Activated CD4-positive, alpha-beta memory T cell treated with anti-CD3 and anti-CD28 coated beads for 36 hours (primary cell): ENCODE measurements at regions of chr11 and their contacts with region 1.

Region 1: GRCh38 chr11:61332797-61333549 is at the starts of genes DDB1 and TKFC:
- DNase-seq: peak; percentile 99
- H3K4me3 Mint-ChIP-seq: peak within 1 kb of the TSS; percentile 97
- H3K27ac Mint-ChIP-seq: peak within 1 kb of the TSS; percentile 97
- H3K4me1 Mint-ChIP-seq: peaks cover 55% of the 10 kb centered on the region
- H3K27me3 Mint-ChIP-seq: no peaks in the 10 kb centered on the region
- total RNA-seq, gene DDB1: 222 to 223 TPM
- total RNA-seq, gene TKFC: 118 to 120 TPM

Region 2: DNA sequence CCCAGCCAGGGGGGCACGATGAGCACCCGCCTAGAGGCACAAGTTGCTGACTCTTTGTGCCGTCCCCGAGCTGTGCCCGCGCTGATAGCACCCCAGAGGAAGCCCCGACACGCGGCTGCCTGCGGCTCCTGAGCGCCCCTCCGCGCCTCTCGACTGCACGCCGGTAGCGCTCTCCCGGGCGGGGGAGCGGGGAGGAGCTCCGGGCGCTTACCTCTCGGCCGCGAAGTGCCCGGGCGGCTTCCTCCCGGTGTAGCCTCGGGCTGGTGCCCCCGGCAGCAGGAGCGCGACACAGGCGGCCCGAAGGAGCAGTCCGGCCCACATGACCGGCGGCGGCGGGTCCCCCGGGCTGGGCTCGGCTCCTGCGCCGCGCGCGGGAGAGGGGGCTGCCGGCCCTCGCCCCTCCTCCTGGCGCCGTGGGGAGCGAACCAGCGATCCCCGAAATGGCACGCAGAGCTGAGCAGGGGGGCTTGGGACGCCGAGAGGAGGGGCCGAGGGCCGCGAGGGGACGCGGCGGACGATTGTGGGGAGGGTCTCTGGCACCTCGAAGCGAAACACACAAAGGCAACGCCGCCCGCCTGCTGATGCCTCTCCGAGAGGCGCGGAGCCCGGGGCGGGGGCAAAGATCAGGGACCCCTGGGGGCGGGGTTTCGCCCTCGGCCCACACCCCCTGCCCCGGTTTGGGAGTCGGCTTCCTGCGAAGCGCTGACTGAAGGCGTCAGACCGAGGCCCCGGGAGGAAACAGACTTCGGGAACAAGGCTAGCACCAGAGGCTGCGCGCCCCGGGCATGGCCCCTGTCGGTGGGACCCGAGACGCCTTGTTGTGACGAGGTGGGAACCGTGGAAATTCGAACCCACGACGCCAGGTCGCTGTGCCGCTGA is 38.0 kb before region 1 on chr11 and contains the start of gene VWCE:
- CTCF ChIA-PET with region 1: interaction called, 10 read pairs
- POLR2A ChIA-PET with region 1: interaction called, 6 read pairs
- intact Hi-C with region 1: no loop called
- DNase-seq: peak; percentile 81
- H3K4me3 Mint-ChIP-seq: peak within 1 kb of the TSS; percentile 72
- H3K27ac Mint-ChIP-seq: no peak within 1 kb of the TSS
- H3K4me1 Mint-ChIP-seq: peaks cover 32% of the 10 kb centered on the region
- H3K27me3 Mint-ChIP-seq: peaks cover 19% of the 10 kb centered on the region
- total RNA-seq, gene VWCE: 1.1 to 1.4 TPM

Region 3: DNA sequence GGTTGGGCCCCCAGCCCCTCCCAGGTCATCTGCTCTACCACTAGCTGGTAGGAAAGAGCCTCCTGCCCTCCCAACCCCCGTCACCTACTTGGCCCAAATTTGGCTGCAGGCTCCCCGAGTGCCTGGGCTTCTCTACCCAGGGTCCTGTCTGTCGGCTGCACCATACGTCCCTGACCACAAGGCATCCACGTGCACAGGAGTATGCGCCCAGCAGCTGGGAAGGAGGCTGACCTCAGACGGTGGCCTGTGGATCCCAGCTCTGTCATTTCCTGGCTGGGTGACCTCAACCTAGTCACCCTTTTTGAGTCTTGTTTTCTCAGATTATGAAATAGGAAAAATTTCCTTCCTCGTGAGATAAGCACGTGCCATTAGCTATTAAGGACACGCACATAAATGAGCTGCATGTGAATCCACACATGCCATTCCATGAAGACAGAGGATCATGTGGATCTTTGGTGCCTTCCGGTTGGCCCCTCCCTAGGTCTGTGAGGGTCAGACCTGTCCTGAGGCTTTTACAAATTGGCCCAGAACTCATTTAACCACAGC is 15.0 kb after region 1 on chr11:
- CTCF ChIA-PET with region 1: interaction called, 16 read pairs
- POLR2A ChIA-PET with region 1: interaction called, 4 read pairs
- intact Hi-C with region 1: no loop called
- DNase-seq: no peak
- H3K4me3 Mint-ChIP-seq: no peak overlapping the region
- H3K27ac Mint-ChIP-seq: no peak overlapping the region
- H3K4me1 Mint-ChIP-seq: no peaks in the 10 kb centered on the region
- H3K27me3 Mint-ChIP-seq: no peaks in the 10 kb centered on the region

Region 4: GRCh38 chr11:61369372-61370219 is 36.6 kb after region 1 on chr11:
- CTCF ChIA-PET with region 1: interaction called, 89 read pairs
- POLR2A ChIA-PET with region 1: no interaction called
- intact Hi-C with region 1: no loop called
- DNase-seq: no peak
- H3K4me3 Mint-ChIP-seq: no peak overlapping the region
- H3K27ac Mint-ChIP-seq: peak overlapping the region; percentile 60
- H3K4me1 Mint-ChIP-seq: peaks cover 8% of the 10 kb centered on the region
- H3K27me3 Mint-ChIP-seq: no peaks in the 10 kb centered on the region

Region 5: GRCh38 chr11:61392981-61393595 is 60.1 kb after region 1 on chr11:
- CTCF ChIA-PET with region 1: interaction called, 50 read pairs
- POLR2A ChIA-PET with region 1: interaction called, 12 read pairs
- intact Hi-C with region 1: loop called (anchors 1 kb)
- DNase-seq: peak; percentile 25
- H3K4me3 Mint-ChIP-seq: peak overlapping the region; percentile 87
- H3K27ac Mint-ChIP-seq: peak overlapping the region; percentile 89
- H3K4me1 Mint-ChIP-seq: peaks cover 18% of the 10 kb centered on the region
- H3K27me3 Mint-ChIP-seq: no peaks in the 10 kb centered on the region

Region 6: DNA sequence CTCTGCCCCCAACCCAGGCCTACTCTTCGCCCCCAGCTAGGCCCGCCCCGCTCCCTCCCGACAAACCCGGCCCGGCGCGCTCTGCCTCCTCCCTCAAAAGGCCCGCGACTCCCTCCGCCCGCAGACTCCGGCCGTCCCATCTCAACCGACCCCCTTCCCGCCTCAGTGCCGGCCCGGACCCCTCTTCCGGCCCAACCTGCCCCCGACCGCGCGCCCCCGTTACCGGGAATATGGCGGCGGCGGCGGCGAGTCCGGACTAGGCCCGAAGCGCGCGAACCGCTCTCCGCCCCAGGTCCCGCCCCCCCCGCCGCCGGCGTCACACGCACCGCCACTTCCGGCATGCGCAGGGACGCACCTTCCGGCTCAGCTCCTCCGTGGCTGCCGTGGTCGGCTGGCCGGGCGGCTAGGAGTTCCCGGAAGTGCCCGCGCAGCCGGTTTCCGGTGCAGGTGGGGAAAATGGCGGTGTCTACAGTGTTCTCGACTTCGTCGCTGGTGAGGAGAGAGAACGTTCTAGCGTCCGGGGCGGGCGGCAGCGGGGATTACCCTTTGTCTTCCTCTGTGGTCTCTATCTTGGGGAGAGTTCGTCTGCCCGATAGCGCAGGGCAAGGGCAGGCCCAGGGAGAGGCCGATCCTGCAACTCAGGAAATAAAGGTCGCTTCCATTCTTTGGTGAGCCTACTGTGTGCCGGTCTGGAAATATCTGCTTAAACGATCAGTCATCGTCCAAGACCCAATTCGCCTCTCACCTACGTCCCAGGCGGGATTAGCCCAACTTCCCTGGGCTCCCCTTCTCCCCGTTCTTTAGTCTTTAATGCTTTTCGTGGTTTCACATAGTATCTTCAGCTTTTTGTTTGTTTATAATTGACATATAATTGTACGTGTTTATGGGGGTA is 97.0 kb after region 1 on chr11 and contains the starts of genes CPSF7 and SDHAF2:
- CTCF ChIA-PET with region 1: interaction called, 17 read pairs
- POLR2A ChIA-PET with region 1: interaction called, 13 read pairs
- intact Hi-C with region 1: loop called (anchors 1 kb)
- DNase-seq: peak; percentile 99
- H3K4me3 Mint-ChIP-seq: peak within 1 kb of the TSS; percentile 88
- H3K27ac Mint-ChIP-seq: peak within 1 kb of the TSS; percentile 95
- H3K4me1 Mint-ChIP-seq: peaks cover 64% of the 10 kb centered on the region
- H3K27me3 Mint-ChIP-seq: no peaks in the 10 kb centered on the region
- total RNA-seq, gene CPSF7: 90.9 to 100 TPM
- total RNA-seq, gene SDHAF2: 31.4 to 35.4 TPM